Natural killer cell (primary cell): ENCODE measurements at regions of chr12 and their contacts with region 1.

Region 1: DNA sequence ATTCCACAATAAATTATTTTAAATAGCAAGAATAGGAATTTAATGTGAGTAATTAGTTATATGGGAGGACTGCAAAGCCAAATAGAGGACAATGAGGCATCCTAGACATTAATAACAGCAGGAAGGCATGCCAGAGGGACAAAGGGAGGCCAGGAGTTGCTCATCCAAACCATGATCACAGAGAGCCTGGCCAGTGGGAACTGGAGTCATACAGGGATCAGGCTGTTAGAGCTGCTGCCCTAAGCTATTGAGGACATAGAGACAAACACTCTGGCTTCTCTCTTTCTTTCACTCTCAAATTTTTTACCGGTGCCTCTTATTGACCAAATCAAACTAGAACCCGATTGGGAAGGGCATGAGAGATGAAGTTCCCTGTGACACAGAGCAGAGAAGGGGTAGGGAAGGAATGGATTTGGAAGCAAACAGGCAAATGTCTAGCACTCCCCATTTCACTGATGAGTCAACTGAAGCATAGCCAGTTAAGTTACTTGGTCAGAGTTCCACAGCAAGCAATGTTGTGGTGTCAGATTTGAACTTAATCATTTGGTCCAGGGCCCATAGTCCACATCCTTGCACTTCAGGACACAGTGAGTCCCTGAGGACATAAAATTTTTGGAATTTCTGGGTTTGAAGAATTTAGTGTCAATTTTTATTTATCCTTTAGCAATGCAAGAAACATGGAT is 17.9 kb upstream of the CFAP54 start:
- DNase-seq: no peak
- ATAC-seq: no peak
- H3K4me3 ChIP-seq: no peak overlapping the region
- H3K4me3 Mint-ChIP-seq: peak overlapping the region; percentile 75
- H3K27ac ChIP-seq: no peak overlapping the region
- H3K27ac Mint-ChIP-seq: peak overlapping the region; percentile 84 to 85
- H3K4me1 ChIP-seq: peaks cover 24% of the 10 kb centered on the region
- H3K4me1 Mint-ChIP-seq: peaks cover 38 to 48% of the 10 kb centered on the region in 2 donors
- H3K27me3 ChIP-seq: no peaks in the 10 kb centered on the region
- H3K27me3 Mint-ChIP-seq: no peaks in the 10 kb centered on the region
- CTCF ChIP-seq: no peak

Region 2: GRCh38 chr12:96343347-96343954 is 128.1 kb before region 1 on chr12:
- intact Hi-C with region 1: loop called (anchors 5 kb)
- DNase-seq: peak in 1 of 2 donors; percentile 64
- ATAC-seq: peak; percentile 72 to 87 (median 77)
- H3K4me3 ChIP-seq: no peak overlapping the region
- H3K4me3 Mint-ChIP-seq: peak overlapping the region; percentile 71
- H3K27ac ChIP-seq: no peak overlapping the region
- H3K27ac Mint-ChIP-seq: peak overlapping the region; percentile 47 to 54
- H3K4me1 ChIP-seq: peaks cover 30% of the 10 kb centered on the region
- H3K4me1 Mint-ChIP-seq: peaks cover 71 to 84% of the 10 kb centered on the region in 2 donors
- H3K27me3 ChIP-seq: no peaks in the 10 kb centered on the region
- H3K27me3 Mint-ChIP-seq: no peaks in the 10 kb centered on the region
- CTCF ChIP-seq: no peak

Region 3: GRCh38 chr12:96434107-96434506 is 37.4 kb before region 1 on chr12:
- intact Hi-C with region 1: loop called (anchors 1 kb)
- DNase-seq: peak; percentile 69 to 94
- ATAC-seq: peak; percentile 97 to 100 (median 97)
- H3K4me3 ChIP-seq: no peak overlapping the region
- H3K4me3 Mint-ChIP-seq: peak overlapping the region; percentile 36
- H3K27ac ChIP-seq: peak overlapping the region; percentile 79
- H3K27ac Mint-ChIP-seq: peak overlapping the region; percentile 68 to 86
- H3K4me1 ChIP-seq: peaks cover 22% of the 10 kb centered on the region
- H3K4me1 Mint-ChIP-seq: peaks cover 6 to 11% of the 10 kb centered on the region in 2 donors
- H3K27me3 ChIP-seq: no peaks in the 10 kb centered on the region
- H3K27me3 Mint-ChIP-seq: no peaks in the 10 kb centered on the region
- CTCF ChIP-seq: no peak

Region 4: DNA sequence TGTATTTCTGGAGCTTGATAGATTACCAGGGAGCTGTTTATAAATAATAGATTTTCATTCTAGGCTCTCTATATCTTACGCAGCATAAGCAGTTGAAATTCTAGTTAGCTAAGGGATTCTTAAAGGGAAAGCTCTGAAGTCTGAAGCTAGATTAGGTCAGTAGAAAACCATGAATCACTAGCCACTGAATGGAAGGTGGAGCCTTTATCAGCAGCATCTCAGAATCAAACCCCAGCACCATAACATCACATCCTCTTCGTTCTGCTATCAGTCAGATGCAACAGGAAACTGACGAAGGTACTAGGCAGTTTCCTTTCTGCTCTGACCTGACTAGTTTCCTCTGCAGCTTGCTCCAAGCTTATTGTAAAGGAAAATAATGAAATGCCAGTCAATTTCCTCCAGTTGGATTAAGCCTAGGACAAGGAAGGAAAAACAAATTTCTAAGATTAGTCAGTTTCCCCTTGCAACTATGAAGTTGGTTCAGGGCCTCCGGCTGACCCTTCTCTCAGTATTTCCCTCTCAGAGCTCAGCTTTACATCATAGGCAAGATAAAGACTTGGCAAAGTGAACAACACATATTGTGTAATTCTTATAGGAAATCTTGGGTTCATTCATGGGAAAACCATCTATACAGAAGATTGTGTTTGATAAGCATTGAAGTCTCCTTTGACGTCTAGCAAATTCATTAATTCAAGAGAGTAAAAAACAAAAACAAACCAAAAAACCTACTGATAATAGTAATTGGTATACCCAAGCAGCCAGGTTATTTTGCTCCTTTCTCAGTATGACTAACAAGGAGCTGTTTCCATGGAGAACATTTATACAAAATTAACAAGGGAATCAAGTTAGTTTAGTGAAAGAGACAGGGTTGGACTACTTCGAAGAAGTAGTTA is 25.6 kb before region 1 on chr12:
- intact Hi-C with region 1: loop called (anchors 2 kb)
- DNase-seq: peak; percentile 33 to 92
- ATAC-seq: peak; percentile 89 to 96 (median 94)
- H3K4me3 ChIP-seq: no peak overlapping the region
- H3K4me3 Mint-ChIP-seq: peak overlapping the region; percentile 75
- H3K27ac ChIP-seq: peak overlapping the region; percentile 92
- H3K27ac Mint-ChIP-seq: peak overlapping the region; percentile 96 to 99
- H3K4me1 ChIP-seq: peaks cover 28% of the 10 kb centered on the region
- H3K4me1 Mint-ChIP-seq: peaks cover 35 to 38% of the 10 kb centered on the region in 2 donors
- H3K27me3 ChIP-seq: no peaks in the 10 kb centered on the region
- H3K27me3 Mint-ChIP-seq: no peaks in the 10 kb centered on the region
- CTCF ChIP-seq: no peak